ENCODE measurements at regions of chr5 and their contacts with region 1.

Region 1: DNA sequence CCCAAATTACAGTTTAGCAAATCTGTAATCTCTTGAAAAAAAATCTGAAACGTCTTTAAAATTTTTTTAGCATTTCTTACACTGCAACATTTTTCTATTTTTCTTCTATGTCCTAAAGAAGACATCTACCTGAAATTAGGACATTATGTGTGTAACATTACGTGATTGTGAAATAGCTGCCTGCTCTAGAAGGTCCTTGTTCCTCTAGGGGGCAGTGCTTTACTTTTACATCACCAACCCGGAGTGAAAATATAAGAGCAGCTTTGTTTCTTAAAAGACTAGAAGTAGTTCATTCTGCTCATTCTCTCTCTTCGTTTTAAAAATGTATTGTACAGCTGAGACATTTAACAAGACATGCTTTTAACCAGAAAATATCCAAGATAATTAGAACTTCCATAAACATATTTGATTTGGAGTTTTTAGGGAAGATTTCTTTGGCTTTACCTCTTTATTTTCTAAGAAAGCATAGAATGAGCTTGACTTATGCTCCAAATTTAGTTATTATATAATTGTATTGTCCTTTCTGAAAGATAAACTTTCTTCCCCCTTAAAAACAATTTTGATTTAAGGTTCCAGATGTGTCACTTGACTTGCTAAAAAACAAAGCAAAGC is 48.1 kb upstream of the RIOK2 start:
- H3K4me3 Mint-ChIP-seq: no peak overlapping the region
- H3K27ac Mint-ChIP-seq: no peak overlapping the region
- H3K4me1 Mint-ChIP-seq: no peaks in the 10 kb centered on the region
- H3K27me3 Mint-ChIP-seq: peaks cover 2% of the 10 kb centered on the region

Region 2: DNA sequence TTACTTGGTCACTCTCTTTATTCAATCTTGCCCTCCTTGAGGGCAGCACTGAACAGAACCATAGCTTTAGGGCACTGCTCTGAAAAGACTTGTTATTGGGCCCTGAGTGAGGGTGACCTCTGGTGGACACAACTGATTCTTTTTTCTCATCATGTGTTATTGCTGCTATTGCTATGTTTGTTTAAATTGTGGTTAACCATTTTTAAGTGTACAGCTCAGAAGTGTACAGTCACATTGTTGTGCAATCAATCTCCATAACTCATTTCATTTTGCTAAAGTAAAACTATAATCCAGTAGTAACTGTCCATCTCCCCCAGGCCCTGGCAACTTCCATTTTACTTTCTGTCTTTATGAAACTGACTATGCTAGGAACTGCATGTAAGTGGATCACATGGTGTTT is 303.0 kb after region 1 on chr5:
- intact Hi-C with region 1: loop called (anchors 1 kb)
- H3K4me3 Mint-ChIP-seq: no peak overlapping the region
- H3K27ac Mint-ChIP-seq: no peak overlapping the region
- H3K4me1 Mint-ChIP-seq: peaks cover 19% of the 10 kb centered on the region
- H3K27me3 Mint-ChIP-seq: no peaks in the 10 kb centered on the region

Region 3: GRCh38 chr5:97750576-97750975 is 519.4 kb after region 1 on chr5:
- intact Hi-C with region 1: no loop called
- H3K4me3 Mint-ChIP-seq: no peak overlapping the region
- H3K27ac Mint-ChIP-seq: no peak overlapping the region
- H3K4me1 Mint-ChIP-seq: no peaks in the 10 kb centered on the region
- H3K27me3 Mint-ChIP-seq: no peaks in the 10 kb centered on the region

Region 4: DNA sequence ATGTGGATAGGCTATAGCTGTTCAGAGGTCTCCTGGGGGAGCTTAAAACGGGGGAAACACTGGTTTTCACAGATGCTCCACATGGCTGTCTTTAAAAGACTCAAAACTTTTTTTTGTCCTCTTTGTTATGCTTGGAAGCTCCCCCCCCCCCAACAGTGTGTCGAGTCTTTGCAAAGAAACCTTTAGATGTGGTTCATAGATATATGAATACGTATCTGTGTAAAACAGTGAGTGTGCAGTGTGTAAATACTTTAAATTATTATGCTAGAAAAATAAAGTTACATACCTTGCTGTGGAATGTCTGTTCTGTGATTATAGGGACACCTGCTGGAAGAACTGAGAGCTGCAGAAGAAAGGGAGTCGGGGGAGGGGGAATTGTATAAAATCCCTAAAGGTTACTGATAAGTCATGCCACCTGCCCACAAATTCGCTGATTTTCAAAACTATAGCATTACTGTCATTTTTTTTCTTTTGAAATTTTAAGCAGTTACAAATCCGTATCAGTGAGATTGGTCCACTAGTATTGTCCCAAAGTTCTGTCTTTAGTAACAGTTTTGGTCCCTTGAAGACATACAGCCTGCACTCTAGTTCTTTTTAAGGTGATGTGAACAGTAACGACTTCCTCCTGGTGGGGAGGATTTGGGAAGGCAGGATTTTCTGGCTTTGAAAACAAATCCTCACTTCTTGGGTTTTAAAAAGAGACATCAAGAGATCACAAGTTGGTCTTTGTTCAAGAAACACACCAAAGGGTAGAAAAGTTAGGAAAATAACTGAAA is 1565.3 kb after region 1 on chr5:
- intact Hi-C with region 1: loop called (anchors 10 kb)
- H3K4me3 Mint-ChIP-seq: no peak overlapping the region
- H3K27ac Mint-ChIP-seq: no peak overlapping the region
- H3K4me1 Mint-ChIP-seq: no peaks in the 10 kb centered on the region
- H3K27me3 Mint-ChIP-seq: peaks cover 7% of the 10 kb centered on the region

Measured in dendritic cell treated with granulocyte-macrophage colony-stimulating factor and Interleukin-4, amounts not matched to agents 40 ng/mL and 50 ng/mL, for 4 days (primary cell).